PC-3 (cell line): ENCODE measurements at regions of chr5 and their contacts with region 1.

Region 1: DNA sequence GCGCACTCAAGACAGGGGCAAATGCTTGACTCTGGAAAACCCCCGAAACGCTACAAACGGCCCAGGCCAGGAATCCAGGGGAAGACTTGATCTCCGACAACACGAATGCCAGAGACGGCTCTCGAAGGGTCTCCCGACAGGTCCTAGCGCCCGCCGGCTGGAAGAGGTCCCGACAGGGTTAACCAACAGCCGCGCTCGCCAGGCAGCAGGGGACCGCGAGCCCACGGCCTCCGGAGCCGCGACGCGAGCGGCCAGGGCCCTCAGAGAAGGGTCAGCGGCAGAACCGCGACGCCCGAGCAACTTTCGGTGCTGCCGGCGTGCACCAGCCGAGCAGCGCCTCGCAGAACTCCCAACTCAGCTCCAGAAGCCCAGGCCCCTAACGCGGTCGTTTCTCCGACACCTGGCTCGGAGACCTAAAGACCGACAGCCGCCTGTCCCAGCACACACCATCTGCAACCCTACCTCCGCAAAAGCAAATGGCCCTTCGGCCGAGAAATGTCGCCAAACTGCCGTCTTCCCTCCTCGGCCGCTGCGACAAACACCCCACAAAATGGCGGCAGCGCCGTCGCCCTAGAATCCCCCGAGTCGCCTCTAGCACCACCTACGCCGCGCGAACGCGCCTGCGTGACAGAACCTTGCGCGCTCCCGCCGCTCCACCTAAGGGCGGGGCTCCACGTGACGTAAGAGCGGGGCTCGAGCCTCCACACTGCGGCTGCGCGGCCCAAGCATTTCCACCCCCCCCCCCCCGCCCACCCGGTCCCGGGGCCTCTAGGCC is at the start of gene CLK4:
- DNase-seq: peak; percentile 95
- ATAC-seq: peak; percentile 61
- H3K4me3 ChIP-seq: peak within 1 kb of the TSS; percentile 87
- H3K27ac ChIP-seq: peak within 1 kb of the TSS; percentile 79
- H3K4me1 ChIP-seq: peaks cover 40% of the 10 kb centered on the region
- H3K27me3 ChIP-seq: no peaks in the 10 kb centered on the region
- CTCF ChIP-seq: no peak
- total RNA-seq, gene CLK4: 11.3 and 23.8 TPM in 2 replicates

Region 2: GRCh38 chr5:178232124-178232919 is 394.3 kb before region 1 on chr5 and contains the start of gene PHYKPL:
- CTCF ChIA-PET with region 1: no interaction called
- POLR2A ChIA-PET with region 1: no interaction called
- intact Hi-C with region 1: loop called (anchors 2 kb)
- DNase-seq: peak; percentile 68
- ATAC-seq: peak; percentile 70
- H3K4me3 ChIP-seq: peak within 1 kb of the TSS; percentile 96
- H3K27ac ChIP-seq: peak within 1 kb of the TSS; percentile 57
- H3K4me1 ChIP-seq: peaks cover 21% of the 10 kb centered on the region
- H3K27me3 ChIP-seq: no peaks in the 10 kb centered on the region
- CTCF ChIP-seq: no peak
- total RNA-seq, gene PHYKPL: 21.7 and 31.2 TPM in 2 replicates

Region 3: GRCh38 chr5:178838695-178839685 is 212.3 kb after region 1 on chr5:
- CTCF ChIA-PET with region 1: no interaction called
- POLR2A ChIA-PET with region 1: no interaction called
- intact Hi-C with region 1: loop called (anchors 10 kb)
- DNase-seq: peak; percentile 82
- ATAC-seq: peak; percentile 98
- H3K4me3 ChIP-seq: no peak overlapping the region
- H3K27ac ChIP-seq: no peak overlapping the region
- H3K4me1 ChIP-seq: no peaks in the 10 kb centered on the region
- H3K27me3 ChIP-seq: peaks cover 10% of the 10 kb centered on the region; the same call in 1 of the 2 replicates
- CTCF ChIP-seq: peak; percentile 89